IMR-90 (cell line): ENCODE measurements at regions of chr4 and their contacts with region 1.

Region 1: GRCh38 chr4:153785910-153786721 is 2.8 kb downstream of the SFRP2 start:
- DNase-seq: peak; percentile 14
- ATAC-seq: no peak
- H3K4me3 ChIP-seq: no peak overlapping the region
- H3K27ac ChIP-seq: no peak overlapping the region
- H3K4me1 ChIP-seq: no peaks in the 10 kb centered on the region; the same call in 1 of the 2 replicates
- H3K27me3 ChIP-seq: peaks cover 42% of the 10 kb centered on the region
- CTCF ChIP-seq: peak; percentile 30
- POLR2A ChIP-seq: no peak
- RAD21 ChIP-seq: no peak

Region 2: GRCh38 chr4:152106113-152106763 is 1679.9 kb before region 1 on chr4:
- CTCF ChIA-PET with region 1: no interaction called
- POLR2A ChIA-PET with region 1: interaction called, 10 read pairs
- dilution Hi-C with region 1: no loop called
- in situ Hi-C with region 1: no loop called
- intact Hi-C with region 1: no loop called
- DNase-seq: peak; percentile 97
- ATAC-seq: peak; percentile 86
- H3K4me3 ChIP-seq: no peak overlapping the region
- H3K27ac ChIP-seq: peak overlapping the region; percentile 33; the same call in 1 of the 2 replicates
- H3K4me1 ChIP-seq: peaks cover 9% of the 10 kb centered on the region
- H3K27me3 ChIP-seq: no peaks in the 10 kb centered on the region
- CTCF ChIP-seq: no peak
- POLR2A ChIP-seq: no peak
- RAD21 ChIP-seq: no peak

Region 3: GRCh38 chr4:153713866-153714646 is 72.1 kb before region 1 on chr4:
- CTCF ChIA-PET with region 1: no interaction called
- POLR2A ChIA-PET with region 1: interaction called, 13 read pairs
- dilution Hi-C with region 1: no loop called
- in situ Hi-C with region 1: no loop called
- intact Hi-C with region 1: no loop called
- DNase-seq: peak; percentile 1
- ATAC-seq: no peak
- H3K4me3 ChIP-seq: no peak overlapping the region
- H3K27ac ChIP-seq: no peak overlapping the region
- H3K4me1 ChIP-seq: no peaks in the 10 kb centered on the region
- H3K27me3 ChIP-seq: no peaks in the 10 kb centered on the region
- CTCF ChIP-seq: no peak
- POLR2A ChIP-seq: no peak
- RAD21 ChIP-seq: no peak

Region 4: DNA sequence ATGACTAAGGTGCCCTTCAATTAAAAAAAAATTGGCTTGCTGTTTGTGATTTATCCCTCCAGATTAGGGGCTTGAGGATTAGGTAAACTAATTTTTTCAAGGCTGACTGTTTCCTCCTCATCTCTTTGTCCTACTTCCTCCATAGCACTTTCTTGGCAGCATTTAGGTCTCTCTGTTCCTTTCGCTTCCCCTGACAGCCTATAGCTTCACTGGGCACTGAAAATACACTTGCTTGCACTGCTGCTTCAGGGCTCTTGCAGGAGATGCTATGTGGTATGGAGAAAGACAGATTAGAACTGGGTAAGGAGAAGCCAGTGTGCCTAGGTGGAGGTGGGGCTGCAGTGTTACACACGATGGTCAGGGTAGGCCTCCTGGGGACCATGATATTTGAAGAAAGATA is 115.1 kb after region 1 on chr4:
- CTCF ChIA-PET with region 1: no interaction called
- POLR2A ChIA-PET with region 1: no interaction called
- dilution Hi-C with region 1: no loop called
- in situ Hi-C with region 1: no loop called
- intact Hi-C with region 1: no loop called
- DNase-seq: no peak
- ATAC-seq: no peak
- H3K4me3 ChIP-seq: no peak overlapping the region
- H3K27ac ChIP-seq: no peak overlapping the region
- H3K4me1 ChIP-seq: no peaks in the 10 kb centered on the region
- H3K27me3 ChIP-seq: no peaks in the 10 kb centered on the region
- CTCF ChIP-seq: no peak
- POLR2A ChIP-seq: no peak
- RAD21 ChIP-seq: no peak

Region 5: DNA sequence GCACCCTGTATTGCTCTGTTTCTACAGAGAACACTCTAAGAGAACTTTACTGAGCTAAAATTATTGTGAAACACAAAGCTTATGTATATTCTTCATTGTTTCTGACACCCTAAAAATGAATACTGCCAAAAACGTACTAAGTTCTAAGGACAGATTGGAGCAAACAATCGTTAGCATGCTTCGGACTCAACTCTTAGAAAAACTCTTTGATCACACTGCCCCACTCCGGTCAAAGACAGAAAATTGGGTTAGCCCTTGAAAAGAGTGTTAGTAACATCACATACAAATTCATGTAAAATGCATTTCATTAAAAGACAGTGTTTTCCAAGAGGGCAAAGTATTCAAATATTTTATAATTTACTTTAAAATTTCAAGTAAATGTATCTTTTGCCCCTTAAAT is 528.1 kb after region 1 on chr4:
- CTCF ChIA-PET with region 1: no interaction called
- POLR2A ChIA-PET with region 1: no interaction called
- dilution Hi-C with region 1: no loop called
- in situ Hi-C with region 1: no loop called
- intact Hi-C with region 1: loop called (anchors 1 kb)
- DNase-seq: no peak
- ATAC-seq: no peak
- H3K4me3 ChIP-seq: no peak overlapping the region
- H3K27ac ChIP-seq: no peak overlapping the region
- H3K4me1 ChIP-seq: no peaks in the 10 kb centered on the region
- H3K27me3 ChIP-seq: no peaks in the 10 kb centered on the region
- CTCF ChIP-seq: no peak
- POLR2A ChIP-seq: no peak
- RAD21 ChIP-seq: peak; percentile 18; the same call in 1 of the 2 replicates

Region 6: DNA sequence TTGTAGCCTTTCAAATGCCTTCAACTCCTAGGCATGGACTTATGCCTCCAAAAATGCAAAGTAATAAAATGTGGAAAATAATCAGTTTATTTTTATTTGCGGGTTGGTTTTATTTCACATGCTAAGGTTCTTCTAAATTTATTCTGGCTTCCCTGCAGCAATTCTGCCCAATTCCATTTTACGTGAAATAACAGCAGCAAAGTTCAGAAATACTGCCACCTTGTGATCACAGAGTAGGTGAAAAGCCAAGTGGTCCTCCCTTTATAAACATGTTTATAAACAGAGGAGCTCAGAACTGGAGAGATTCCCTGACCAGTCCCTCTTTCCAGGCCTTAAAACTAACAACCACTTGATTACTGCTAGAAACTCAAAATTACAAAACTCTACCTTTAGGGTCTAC is 720.1 kb after region 1 on chr4:
- CTCF ChIA-PET with region 1: no interaction called
- POLR2A ChIA-PET with region 1: no interaction called
- dilution Hi-C with region 1: no loop called
- in situ Hi-C with region 1: no loop called
- intact Hi-C with region 1: loop called (anchors 10 kb)
- DNase-seq: peak; percentile 13
- ATAC-seq: 0 out of 2 replicates have a peak, but pooled peaks have one; percentile 42
- H3K4me3 ChIP-seq: no peak overlapping the region
- H3K27ac ChIP-seq: no peak overlapping the region
- H3K4me1 ChIP-seq: no peaks in the 10 kb centered on the region
- H3K27me3 ChIP-seq: no peaks in the 10 kb centered on the region; the same call in 1 of the 2 replicates
- CTCF ChIP-seq: peak; percentile 35; the same call in 1 of the 2 replicates
- POLR2A ChIP-seq: no peak
- RAD21 ChIP-seq: peak; percentile 31; the same call in 1 of the 2 replicates